ENCODE measurements at regions of chr18 and their contacts with region 1.

Region 1: GRCh38 chr18:11937874-11938478 is 29.9 kb upstream of the MPPE1 start:
- DNase-seq: peak; percentile 54 to 80 (median 63)
- H3K4me3 ChIP-seq: no peak overlapping the region
- H3K4me3 Mint-ChIP-seq: no peak overlapping the region
- H3K27ac ChIP-seq: no peak overlapping the region
- H3K27ac Mint-ChIP-seq: peak overlapping the region in 1 of 8 donors; percentile 47
- H3K4me1 ChIP-seq: no peaks in the 10 kb centered on the region
- H3K4me1 Mint-ChIP-seq: peaks cover 0 to 3% (median 0%) of the 10 kb centered on the region in 3 donors
- H3K27me3 ChIP-seq: no peaks in the 10 kb centered on the region
- H3K27me3 Mint-ChIP-seq: peaks cover 0 to 2% of the 10 kb centered on the region in 2 donors

Region 2: DNA sequence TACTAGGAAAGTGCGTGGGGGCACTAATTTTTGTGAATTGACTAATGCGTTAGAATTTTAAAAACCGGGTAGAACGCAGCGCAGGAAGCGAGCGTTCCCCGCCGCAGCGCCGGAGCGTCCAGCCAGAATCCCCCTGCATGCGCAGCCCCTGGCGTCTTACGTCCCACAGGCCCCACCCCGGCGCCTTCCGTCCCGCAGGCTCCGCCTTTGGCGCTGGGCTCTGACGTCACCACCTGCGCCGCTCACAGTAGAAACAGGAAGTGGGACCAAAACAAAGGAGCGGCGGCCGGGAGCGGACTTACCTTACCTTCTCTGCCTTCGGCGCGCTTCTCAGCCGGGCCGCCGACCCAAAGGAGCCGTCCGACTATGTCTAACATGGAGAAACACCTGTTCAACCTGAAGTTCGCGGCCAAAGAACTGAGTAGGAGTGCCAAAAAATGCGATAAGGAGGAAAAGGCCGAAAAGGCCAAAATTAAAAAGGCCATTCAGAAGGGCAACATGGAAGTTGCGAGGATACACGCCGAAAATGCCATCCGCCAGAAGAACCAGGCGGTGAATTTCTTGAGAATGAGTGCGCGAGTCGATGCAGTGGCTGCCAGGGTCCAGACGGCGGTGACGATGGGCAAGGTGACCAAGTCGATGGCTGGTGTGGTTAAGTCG is 86.7 kb before region 1 on chr18 and contains the start of gene CHMP1B:
- CTCF ChIA-PET with region 1: no interaction called
- POLR2A ChIA-PET with region 1: no interaction called
- DNase-seq: peak; percentile 94 to 98 (median 96)
- H3K4me3 ChIP-seq: peak within 1 kb of the TSS; percentile 99
- H3K4me3 Mint-ChIP-seq: peak within 1 kb of the TSS; percentile 99 to 100 (median 100)
- H3K27ac ChIP-seq: peak within 1 kb of the TSS; percentile 97
- H3K27ac Mint-ChIP-seq: peak within 1 kb of the TSS; percentile 97 to 100 (median 100)
- H3K4me1 ChIP-seq: peaks cover 22% of the 10 kb centered on the region
- H3K4me1 Mint-ChIP-seq: peaks cover 34 to 64% (median 54%) of the 10 kb centered on the region in 3 donors
- H3K27me3 ChIP-seq: no peaks in the 10 kb centered on the region
- H3K27me3 Mint-ChIP-seq: peaks cover 0 to 3% of the 10 kb centered on the region in 2 donors
- total RNA-seq, gene CHMP1B: 24.5 to 24.9 TPM

Region 3: DNA sequence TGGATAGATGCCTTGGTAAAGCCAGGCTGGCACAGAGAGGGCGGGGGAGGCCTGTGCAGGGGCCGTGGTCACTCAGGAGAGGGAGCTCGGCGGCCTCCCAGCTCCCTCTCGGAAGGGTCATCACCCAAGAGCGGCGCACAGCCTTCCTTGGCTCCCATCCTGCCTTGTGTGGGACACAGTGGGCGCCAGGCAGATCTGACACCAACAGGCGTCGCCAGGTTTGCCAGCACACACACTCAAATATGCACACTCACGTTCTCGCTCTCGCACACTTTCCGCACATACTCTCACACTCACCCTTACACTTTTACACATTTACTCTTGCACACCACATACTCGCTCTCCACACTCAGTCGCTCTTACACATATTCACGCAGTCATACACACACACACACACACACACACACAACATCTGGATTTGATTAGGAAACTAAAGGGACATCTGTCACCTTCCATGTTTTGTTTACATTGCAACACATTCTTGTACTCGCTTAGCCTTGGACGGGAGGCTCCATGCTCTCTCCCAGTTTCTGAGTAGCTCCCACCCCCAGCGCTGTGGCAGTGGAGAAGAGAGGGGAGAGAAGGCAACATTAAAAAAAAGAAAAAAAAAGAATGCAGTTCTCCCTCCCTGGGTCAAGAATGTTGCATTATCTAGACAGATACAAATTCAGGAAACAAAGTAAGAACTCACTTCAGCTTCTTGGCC is 76.2 kb before region 1 on chr18:
- CTCF ChIA-PET with region 1: no interaction called
- POLR2A ChIA-PET with region 1: no interaction called
- DNase-seq: no peak
- H3K4me3 ChIP-seq: no peak overlapping the region
- H3K4me3 Mint-ChIP-seq: peak overlapping the region in 1 of 7 donors; percentile 40
- H3K27ac ChIP-seq: no peak overlapping the region
- H3K27ac Mint-ChIP-seq: no peak overlapping the region
- H3K4me1 ChIP-seq: no peaks in the 10 kb centered on the region
- H3K4me1 Mint-ChIP-seq: peaks cover 0 to 5% (median 0%) of the 10 kb centered on the region in 3 donors
- H3K27me3 ChIP-seq: no peaks in the 10 kb centered on the region
- H3K27me3 Mint-ChIP-seq: peaks cover 9 to 10% of the 10 kb centered on the region in 2 donors

Region 4: GRCh38 chr18:11899063-11899462 is 38.9 kb before region 1 on chr18:
- CTCF ChIA-PET with region 1: no interaction called
- POLR2A ChIA-PET with region 1: no interaction called
- DNase-seq: no peak
- H3K4me3 ChIP-seq: no peak overlapping the region
- H3K4me3 Mint-ChIP-seq: no peak overlapping the region
- H3K27ac ChIP-seq: no peak overlapping the region
- H3K27ac Mint-ChIP-seq: no peak overlapping the region
- H3K4me1 ChIP-seq: no peaks in the 10 kb centered on the region
- H3K4me1 Mint-ChIP-seq: peaks cover 6 to 19% (median 15%) of the 10 kb centered on the region in 3 donors
- H3K27me3 ChIP-seq: no peaks in the 10 kb centered on the region
- H3K27me3 Mint-ChIP-seq: no peaks in the 10 kb centered on the region

Region 5: DNA sequence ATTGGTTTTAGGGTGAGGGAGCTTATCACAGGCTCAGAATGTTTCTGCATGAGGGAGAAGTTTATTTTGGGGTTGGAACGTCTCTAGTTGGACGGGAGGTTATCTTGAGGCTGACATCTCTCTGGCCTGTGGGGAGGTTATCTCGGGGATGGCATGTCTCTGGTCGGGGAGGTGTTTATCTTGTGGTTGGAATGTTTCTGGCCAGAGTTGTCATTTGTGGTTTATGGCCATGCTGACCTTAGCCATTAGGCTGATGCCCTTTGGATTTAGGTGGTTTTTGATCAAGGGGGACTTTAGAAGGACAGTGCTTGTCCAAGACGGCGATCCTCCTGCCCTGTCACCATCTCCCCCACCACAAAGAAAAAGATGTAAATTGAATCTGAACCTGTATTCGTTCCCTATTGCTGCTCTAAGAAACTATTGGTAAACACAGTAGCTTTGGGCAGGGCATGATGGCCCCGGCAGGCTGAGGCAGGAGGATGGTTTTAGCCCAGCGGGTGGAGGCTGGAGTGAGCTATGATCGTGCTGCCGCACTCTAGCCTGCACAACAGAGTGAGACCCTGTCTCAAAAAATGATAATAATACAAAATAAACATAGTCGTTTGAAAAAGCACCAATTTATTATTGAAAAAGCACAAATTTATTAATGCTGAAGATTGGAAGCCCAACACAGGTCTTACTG is 12.0 kb before region 1 on chr18:
- CTCF ChIA-PET with region 1: interaction called, 17 read pairs
- POLR2A ChIA-PET with region 1: no interaction called
- DNase-seq: no peak
- H3K4me3 ChIP-seq: no peak overlapping the region
- H3K4me3 Mint-ChIP-seq: no peak overlapping the region
- H3K27ac ChIP-seq: no peak overlapping the region
- H3K27ac Mint-ChIP-seq: no peak overlapping the region
- H3K4me1 ChIP-seq: no peaks in the 10 kb centered on the region
- H3K4me1 Mint-ChIP-seq: peaks cover 0 to 7% (median 0%) of the 10 kb centered on the region in 3 donors
- H3K27me3 ChIP-seq: no peaks in the 10 kb centered on the region
- H3K27me3 Mint-ChIP-seq: peaks cover 3 to 8% of the 10 kb centered on the region in 2 donors

Region 6: GRCh38 chr18:11980555-11981382 is 42.8 kb after region 1 on chr18:
- CTCF ChIA-PET with region 1: interaction called, 19 read pairs
- POLR2A ChIA-PET with region 1: no interaction called
- DNase-seq: peak; percentile 91 to 95 (median 93)
- H3K4me3 ChIP-seq: peak overlapping the region; percentile 64
- H3K4me3 Mint-ChIP-seq: peak overlapping the region; percentile 84 to 93 (median 86)
- H3K27ac ChIP-seq: peak overlapping the region; percentile 30
- H3K27ac Mint-ChIP-seq: peak overlapping the region in 7 of 8 donors; percentile 13 to 84 (median 67)
- H3K4me1 ChIP-seq: peaks cover 12% of the 10 kb centered on the region
- H3K4me1 Mint-ChIP-seq: peaks cover 11 to 16% (median 14%) of the 10 kb centered on the region in 3 donors
- H3K27me3 ChIP-seq: no peaks in the 10 kb centered on the region
- H3K27me3 Mint-ChIP-seq: no peaks in the 10 kb centered on the region

Region 7: DNA sequence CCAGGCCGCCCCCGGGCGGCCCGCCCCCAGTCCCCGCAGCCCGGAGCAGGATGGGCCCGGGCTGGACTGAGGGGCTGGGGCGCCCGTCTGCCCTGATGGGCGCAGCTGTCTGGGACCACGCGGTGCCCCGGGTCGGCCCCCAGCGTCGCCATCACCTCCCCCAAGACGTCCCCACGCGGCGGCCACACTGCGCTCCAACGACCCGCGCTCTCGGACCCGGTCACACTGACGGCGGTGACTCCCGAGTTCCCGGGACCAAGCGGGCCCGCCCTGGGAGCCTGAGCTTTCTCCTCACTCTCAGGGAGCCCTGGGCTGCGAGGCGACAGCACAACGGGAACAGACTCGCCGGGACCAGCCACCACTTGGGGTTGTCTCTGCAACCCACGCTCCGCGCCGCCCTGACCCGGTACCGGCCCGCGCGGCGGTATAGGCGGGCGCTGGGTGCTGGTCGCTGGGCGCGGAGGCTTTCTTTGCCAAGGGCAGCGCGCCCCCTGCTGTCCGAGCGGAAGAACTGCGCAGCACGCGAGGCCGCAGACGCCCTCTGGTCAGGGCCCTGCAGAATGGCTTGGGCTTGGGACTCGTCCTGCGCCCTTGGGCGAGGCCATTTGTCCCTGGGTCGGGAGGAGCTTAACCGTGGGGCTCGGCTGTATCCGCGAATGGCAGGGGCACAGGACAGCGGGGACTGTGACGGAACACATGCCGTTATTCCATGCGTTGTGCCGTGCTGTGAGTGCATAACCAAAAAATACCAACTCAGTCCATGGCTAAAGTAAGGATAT is 100.9 kb after region 1 on chr18:
- CTCF ChIA-PET with region 1: interaction called, 64 read pairs
- POLR2A ChIA-PET with region 1: no interaction called
- DNase-seq: peak; percentile 61 to 72 (median 64)
- H3K4me3 ChIP-seq: no peak overlapping the region
- H3K4me3 Mint-ChIP-seq: peak overlapping the region; percentile 54 to 91 (median 64)
- H3K27ac ChIP-seq: no peak overlapping the region
- H3K27ac Mint-ChIP-seq: no peak overlapping the region
- H3K4me1 ChIP-seq: no peaks in the 10 kb centered on the region
- H3K4me1 Mint-ChIP-seq: peaks cover 0 to 8% (median 0%) of the 10 kb centered on the region in 3 donors
- H3K27me3 ChIP-seq: peaks cover 3% of the 10 kb centered on the region
- H3K27me3 Mint-ChIP-seq: peaks cover 16 to 18% of the 10 kb centered on the region in 2 donors

Region 8: GRCh38 chr18:12060182-12060870 is 122.3 kb after region 1 on chr18:
- CTCF ChIA-PET with region 1: no interaction called
- POLR2A ChIA-PET with region 1: no interaction called
- DNase-seq: no peak
- H3K4me3 ChIP-seq: no peak overlapping the region
- H3K4me3 Mint-ChIP-seq: no peak overlapping the region
- H3K27ac ChIP-seq: no peak overlapping the region
- H3K27ac Mint-ChIP-seq: no peak overlapping the region
- H3K4me1 ChIP-seq: no peaks in the 10 kb centered on the region
- H3K4me1 Mint-ChIP-seq: no peaks in the 10 kb centered on the region
- H3K27me3 ChIP-seq: no peaks in the 10 kb centered on the region
- H3K27me3 Mint-ChIP-seq: peaks cover 0 to 4% of the 10 kb centered on the region in 2 donors

Measured in CD8-positive, alpha-beta memory T cell (primary cell).